CD8-positive, alpha-beta T cell (primary cell): ENCODE measurements at regions of chr3 and their contacts with region 1.

Region 1: GRCh38 chr3:14261229-14261628 is 82.6 kb downstream of the LSM3 start:
- DNase-seq: peak; percentile 50 to 88 (median 77)
- ATAC-seq: no peak
- H3K4me3 ChIP-seq: no peak overlapping the region
- H3K4me3 Mint-ChIP-seq: no peak overlapping the region
- H3K27ac ChIP-seq: no peak overlapping the region
- H3K27ac Mint-ChIP-seq: no peak overlapping the region
- H3K4me1 ChIP-seq: no peaks in the 10 kb centered on the region
- H3K4me1 Mint-ChIP-seq: no peaks in the 10 kb centered on the region
- H3K27me3 ChIP-seq: no peaks in the 10 kb centered on the region
- H3K27me3 Mint-ChIP-seq: peaks cover 2% of the 10 kb centered on the region
- CTCF ChIP-seq: peak; percentile 100

Region 2: DNA sequence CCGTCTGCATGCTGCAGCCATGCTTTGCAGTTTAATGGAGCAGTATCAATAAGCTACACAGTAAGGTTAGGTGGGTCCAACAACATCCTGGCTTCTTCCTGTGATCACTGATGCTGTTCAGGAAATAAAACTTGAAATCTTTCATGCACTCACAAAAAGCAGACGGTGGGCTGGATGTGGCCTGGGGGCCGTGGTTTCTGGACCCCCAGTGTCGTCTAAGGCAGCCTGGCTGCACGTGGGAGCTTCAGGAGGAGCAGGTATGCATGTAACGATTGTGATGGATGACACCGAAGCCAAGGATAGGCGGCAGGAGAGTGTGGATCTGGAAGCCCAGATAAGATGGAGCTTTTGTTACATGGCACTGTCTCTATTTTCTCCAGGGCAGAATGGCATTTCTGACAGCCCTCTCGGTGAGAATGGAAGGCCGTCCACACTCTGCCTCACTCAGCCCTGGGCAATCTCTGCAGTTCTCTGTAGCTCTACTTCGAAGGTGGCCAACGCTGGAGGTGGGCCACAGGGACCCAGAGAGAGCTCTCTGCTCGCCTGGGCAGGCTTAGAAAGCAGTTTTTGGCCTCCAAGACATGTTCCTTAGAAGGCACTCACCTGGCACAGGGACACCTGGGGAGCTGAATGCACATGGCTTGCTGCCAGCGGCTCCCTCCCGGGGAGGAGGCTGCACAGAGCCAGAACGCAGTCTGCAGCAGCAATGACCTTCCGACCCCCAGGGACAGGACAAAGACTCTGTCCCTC is 1141.6 kb before region 1 on chr3:
- CTCF ChIA-PET with region 1: no interaction called
- POLR2A ChIA-PET with region 1: no interaction called
- intact Hi-C with region 1: no loop called
- DNase-seq: no peak
- ATAC-seq: no peak
- H3K4me3 ChIP-seq: no peak overlapping the region
- H3K4me3 Mint-ChIP-seq: no peak overlapping the region
- H3K27ac ChIP-seq: no peak overlapping the region
- H3K27ac Mint-ChIP-seq: no peak overlapping the region
- H3K4me1 ChIP-seq: no peaks in the 10 kb centered on the region
- H3K4me1 Mint-ChIP-seq: no peaks in the 10 kb centered on the region
- H3K27me3 ChIP-seq: no peaks in the 10 kb centered on the region
- H3K27me3 Mint-ChIP-seq: peaks cover 2% of the 10 kb centered on the region
- CTCF ChIP-seq: no peak

Region 3: GRCh38 chr3:14275962-14276909 is 15.0 kb after region 1 on chr3:
- CTCF ChIA-PET with region 1: interaction called, 10 read pairs
- POLR2A ChIA-PET with region 1: no interaction called
- intact Hi-C with region 1: no loop called
- DNase-seq: no peak
- ATAC-seq: no peak
- H3K4me3 ChIP-seq: no peak overlapping the region
- H3K4me3 Mint-ChIP-seq: no peak overlapping the region
- H3K27ac ChIP-seq: no peak overlapping the region
- H3K27ac Mint-ChIP-seq: no peak overlapping the region
- H3K4me1 ChIP-seq: no peaks in the 10 kb centered on the region
- H3K4me1 Mint-ChIP-seq: no peaks in the 10 kb centered on the region
- H3K27me3 ChIP-seq: no peaks in the 10 kb centered on the region
- H3K27me3 Mint-ChIP-seq: peaks cover 10% of the 10 kb centered on the region
- CTCF ChIP-seq: no peak

Region 4: GRCh38 chr3:14301558-14301957 is 40.3 kb after region 1 on chr3:
- CTCF ChIA-PET with region 1: no interaction called
- POLR2A ChIA-PET with region 1: no interaction called
- intact Hi-C with region 1: no loop called
- DNase-seq: no peak
- ATAC-seq: no peak
- H3K4me3 ChIP-seq: no peak overlapping the region
- H3K4me3 Mint-ChIP-seq: no peak overlapping the region
- H3K27ac ChIP-seq: no peak overlapping the region
- H3K27ac Mint-ChIP-seq: no peak overlapping the region
- H3K4me1 ChIP-seq: no peaks in the 10 kb centered on the region
- H3K4me1 Mint-ChIP-seq: peaks cover 6% of the 10 kb centered on the region
- H3K27me3 ChIP-seq: no peaks in the 10 kb centered on the region
- H3K27me3 Mint-ChIP-seq: peaks cover 2% of the 10 kb centered on the region
- CTCF ChIP-seq: no peak

Region 5: DNA sequence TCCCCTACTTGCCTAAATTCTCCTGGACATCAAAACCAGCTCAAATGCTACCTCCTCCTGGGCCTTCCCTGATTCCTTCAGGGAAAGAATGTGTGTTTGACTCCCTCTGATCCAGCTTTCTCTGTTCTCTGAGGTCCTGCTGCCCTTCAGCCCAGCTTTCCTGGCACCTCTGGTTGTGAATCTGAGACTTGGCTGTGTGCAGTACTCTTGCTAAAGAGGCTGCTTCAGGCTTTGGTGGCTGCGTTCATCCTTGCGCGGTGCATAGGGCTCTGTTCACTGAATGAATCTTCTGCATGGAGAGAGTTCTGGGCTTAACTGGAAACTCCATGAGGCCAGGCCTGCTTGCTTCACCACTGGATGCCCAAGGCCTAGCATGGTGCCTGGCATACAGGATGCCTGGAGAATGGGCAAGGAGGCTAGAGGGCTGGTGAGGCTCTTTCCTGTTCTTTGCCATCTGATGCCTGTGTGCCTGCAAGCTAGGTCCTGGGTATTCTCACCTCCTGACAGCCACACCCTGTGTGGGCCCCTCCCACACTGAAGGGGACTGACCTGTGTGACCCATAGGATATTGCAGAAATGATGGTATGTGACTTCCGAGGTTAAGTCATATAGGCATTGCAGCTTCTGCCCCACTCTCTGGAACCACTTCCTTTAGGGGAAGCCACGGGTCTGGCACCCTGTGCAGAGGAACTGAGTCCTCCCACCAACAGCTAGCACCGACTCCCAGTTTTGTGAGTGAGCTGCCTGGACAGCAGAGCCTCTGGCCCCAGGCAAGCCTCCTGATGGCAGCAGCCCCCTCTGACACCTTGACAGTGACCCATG is 116.3 kb after region 1 on chr3:
- CTCF ChIA-PET with region 1: interaction called, 15 read pairs
- POLR2A ChIA-PET with region 1: no interaction called
- intact Hi-C with region 1: no loop called
- DNase-seq: peak; percentile 15 to 81 (median 41)
- ATAC-seq: peak; percentile 88
- H3K4me3 ChIP-seq: no peak overlapping the region
- H3K4me3 Mint-ChIP-seq: no peak overlapping the region
- H3K27ac ChIP-seq: no peak overlapping the region
- H3K27ac Mint-ChIP-seq: peak overlapping the region; percentile 56
- H3K4me1 ChIP-seq: peaks cover 16% of the 10 kb centered on the region
- H3K4me1 Mint-ChIP-seq: peaks cover 21% of the 10 kb centered on the region
- H3K27me3 ChIP-seq: no peaks in the 10 kb centered on the region
- H3K27me3 Mint-ChIP-seq: no peaks in the 10 kb centered on the region
- CTCF ChIP-seq: no peak

Region 6: DNA sequence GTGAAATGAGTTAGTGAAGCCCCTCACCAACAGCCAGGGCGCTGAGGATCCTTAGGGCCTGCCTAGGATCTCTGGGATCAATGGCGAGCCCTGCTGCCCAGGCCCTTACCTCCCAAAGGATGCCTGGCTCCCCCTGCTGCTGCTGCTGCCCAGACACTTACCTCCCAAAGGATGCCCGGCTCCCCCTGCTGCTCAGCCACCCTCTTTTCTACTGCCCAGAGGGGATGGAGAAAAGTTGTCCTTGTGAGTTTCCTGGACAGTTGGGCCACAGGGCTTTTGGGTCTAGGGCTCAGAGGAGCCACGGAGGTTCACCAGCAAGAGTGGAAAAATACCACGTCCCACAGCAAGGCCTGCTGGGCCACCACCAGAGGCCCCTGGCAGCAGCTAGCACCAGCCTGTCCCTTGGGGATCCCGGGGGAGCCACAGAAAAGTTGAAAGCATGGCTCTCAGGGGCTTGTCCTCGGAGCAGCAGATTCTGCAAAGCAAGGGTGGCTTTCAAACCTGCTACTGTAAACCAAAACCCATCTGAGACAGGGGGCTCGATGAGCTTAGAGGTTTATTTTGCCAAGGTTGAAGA is 200.6 kb after region 1 on chr3:
- CTCF ChIA-PET with region 1: interaction called, 204 read pairs
- POLR2A ChIA-PET with region 1: no interaction called
- intact Hi-C with region 1: loop called in 1 of 2 experiments (anchors 1 kb)
- DNase-seq: peak in 8 of 9 experiments; percentile 22 to 68 (median 53)
- ATAC-seq: peak; percentile 64
- H3K4me3 ChIP-seq: no peak overlapping the region
- H3K4me3 Mint-ChIP-seq: no peak overlapping the region
- H3K27ac ChIP-seq: no peak overlapping the region
- H3K27ac Mint-ChIP-seq: no peak overlapping the region
- H3K4me1 ChIP-seq: no peaks in the 10 kb centered on the region
- H3K4me1 Mint-ChIP-seq: no peaks in the 10 kb centered on the region
- H3K27me3 ChIP-seq: no peaks in the 10 kb centered on the region
- H3K27me3 Mint-ChIP-seq: no peaks in the 10 kb centered on the region
- CTCF ChIP-seq: no peak

Region 7: DNA sequence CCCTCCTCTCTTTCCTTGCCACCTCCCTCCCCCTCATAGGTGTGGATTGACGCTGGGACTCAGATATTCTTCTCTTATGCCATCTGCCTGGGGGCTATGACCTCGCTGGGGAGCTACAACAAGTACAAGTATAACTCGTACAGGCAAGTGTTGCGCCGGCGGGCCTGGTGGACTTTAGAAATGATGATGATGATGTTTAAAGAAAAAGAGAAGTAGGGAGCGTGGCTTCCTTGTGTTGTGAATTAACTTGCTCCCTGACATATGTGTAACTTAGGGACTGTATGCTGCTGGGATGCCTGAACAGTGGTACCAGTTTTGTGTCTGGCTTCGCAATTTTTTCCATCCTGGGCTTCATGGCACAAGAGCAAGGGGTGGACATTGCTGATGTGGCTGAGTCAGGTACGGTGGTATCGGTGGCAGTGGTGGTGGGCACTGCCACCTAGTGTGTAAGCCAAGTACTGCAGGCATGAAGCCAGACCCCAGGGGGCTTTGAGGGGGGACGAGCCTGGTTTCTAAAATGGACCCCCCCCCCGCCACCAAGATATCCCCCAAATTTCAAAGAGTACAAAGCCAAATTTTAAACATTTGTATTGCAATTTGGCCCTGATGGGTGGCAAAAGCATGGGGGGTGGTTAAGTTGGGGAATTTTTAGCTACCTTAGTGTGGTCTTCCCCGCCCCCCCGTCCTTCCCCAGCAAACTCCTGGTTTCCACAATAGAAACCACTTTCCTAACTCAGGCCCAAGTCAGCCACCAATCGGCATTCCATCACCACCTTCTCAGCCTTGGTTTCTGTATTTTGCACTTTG is 206.8 kb after region 1 on chr3:
- CTCF ChIA-PET with region 1: interaction called, 204 read pairs
- POLR2A ChIA-PET with region 1: no interaction called
- intact Hi-C with region 1: loop called (anchors 1 kb)
- DNase-seq: peak; percentile 17 to 69 (median 48)
- ATAC-seq: peak; percentile 84
- H3K4me3 ChIP-seq: no peak overlapping the region
- H3K4me3 Mint-ChIP-seq: no peak overlapping the region
- H3K27ac ChIP-seq: no peak overlapping the region
- H3K27ac Mint-ChIP-seq: no peak overlapping the region
- H3K4me1 ChIP-seq: no peaks in the 10 kb centered on the region
- H3K4me1 Mint-ChIP-seq: no peaks in the 10 kb centered on the region
- H3K27me3 ChIP-seq: no peaks in the 10 kb centered on the region
- H3K27me3 Mint-ChIP-seq: no peaks in the 10 kb centered on the region
- CTCF ChIP-seq: peak; percentile 87

Region 8: GRCh38 chr3:14548321-14548729 is 287.1 kb after region 1 on chr3:
- CTCF ChIA-PET with region 1: interaction called, 4 read pairs
- POLR2A ChIA-PET with region 1: no interaction called
- intact Hi-C with region 1: loop called in 1 of 2 experiments (anchors 1 kb)
- DNase-seq: peak in 8 of 9 experiments; percentile 3 to 53 (median 36)
- ATAC-seq: no peak
- H3K4me3 ChIP-seq: no peak overlapping the region
- H3K4me3 Mint-ChIP-seq: no peak overlapping the region
- H3K27ac ChIP-seq: no peak overlapping the region
- H3K27ac Mint-ChIP-seq: no peak overlapping the region
- H3K4me1 ChIP-seq: no peaks in the 10 kb centered on the region
- H3K4me1 Mint-ChIP-seq: no peaks in the 10 kb centered on the region
- H3K27me3 ChIP-seq: no peaks in the 10 kb centered on the region
- H3K27me3 Mint-ChIP-seq: peaks cover 30% of the 10 kb centered on the region
- CTCF ChIP-seq: peak; percentile 25

Region 9: DNA sequence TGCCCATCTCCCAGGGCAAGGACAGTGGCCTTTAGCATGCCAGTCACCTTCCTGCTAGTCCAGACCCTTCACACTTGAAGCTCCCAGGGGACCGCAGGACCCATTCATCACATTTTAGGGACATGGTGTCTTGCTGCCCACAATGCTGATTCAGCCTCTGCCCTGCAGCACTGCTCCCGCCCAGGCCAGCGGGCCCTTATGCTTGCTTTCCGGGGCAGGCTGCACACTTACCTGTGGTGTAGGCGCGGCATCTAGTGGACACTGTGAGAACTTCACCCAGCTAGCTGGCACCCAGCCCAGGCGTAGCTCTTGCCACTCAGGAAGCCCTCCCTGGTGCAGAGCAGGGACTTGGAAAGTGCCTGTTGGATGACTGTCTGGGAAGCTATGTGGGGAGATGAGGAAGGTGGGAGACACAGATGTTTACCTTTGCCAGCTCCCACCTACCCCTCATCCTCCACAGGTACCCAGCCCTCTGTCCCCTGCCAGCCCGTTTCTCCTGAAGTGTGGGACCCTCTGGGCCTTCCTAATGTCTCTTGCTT is 659.9 kb after region 1 on chr3:
- CTCF ChIA-PET with region 1: interaction called, 3 read pairs
- POLR2A ChIA-PET with region 1: no interaction called
- intact Hi-C with region 1: loop called (anchors 2 to 5 kb)
- DNase-seq: peak; percentile 68 to 93 (median 83)
- ATAC-seq: peak; percentile 99
- H3K4me3 ChIP-seq: no peak overlapping the region
- H3K4me3 Mint-ChIP-seq: no peak overlapping the region
- H3K27ac ChIP-seq: no peak overlapping the region
- H3K27ac Mint-ChIP-seq: no peak overlapping the region
- H3K4me1 ChIP-seq: peaks cover 4% of the 10 kb centered on the region
- H3K4me1 Mint-ChIP-seq: no peaks in the 10 kb centered on the region
- H3K27me3 ChIP-seq: no peaks in the 10 kb centered on the region
- H3K27me3 Mint-ChIP-seq: no peaks in the 10 kb centered on the region
- CTCF ChIP-seq: peak; percentile 99

Region 10: DNA sequence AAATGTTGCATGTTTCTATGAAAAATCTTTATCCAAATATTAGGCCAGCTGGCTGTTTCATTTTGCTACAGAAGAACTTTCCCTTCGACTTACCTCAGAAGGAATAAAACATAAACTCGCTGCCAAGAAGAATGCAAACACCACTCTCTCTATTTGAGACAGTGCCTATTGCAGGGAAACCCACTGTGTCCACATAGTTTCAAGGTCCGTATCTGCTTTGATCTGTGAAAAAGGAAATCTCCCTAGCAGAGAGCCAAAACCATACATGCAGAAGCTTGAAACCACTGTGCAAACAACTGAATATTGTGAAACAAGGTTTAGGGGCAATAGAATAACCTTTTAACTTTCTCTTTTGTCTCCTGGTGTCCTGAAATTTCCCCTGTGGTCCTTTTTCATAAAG is 909.9 kb after region 1 on chr3:
- CTCF ChIA-PET with region 1: no interaction called
- POLR2A ChIA-PET with region 1: no interaction called
- intact Hi-C with region 1: no loop called
- DNase-seq: no peak
- ATAC-seq: no peak
- H3K4me3 ChIP-seq: no peak overlapping the region
- H3K4me3 Mint-ChIP-seq: no peak overlapping the region
- H3K27ac ChIP-seq: no peak overlapping the region
- H3K27ac Mint-ChIP-seq: no peak overlapping the region
- H3K4me1 ChIP-seq: no peaks in the 10 kb centered on the region
- H3K4me1 Mint-ChIP-seq: no peaks in the 10 kb centered on the region
- H3K27me3 ChIP-seq: no peaks in the 10 kb centered on the region
- H3K27me3 Mint-ChIP-seq: peaks cover 17% of the 10 kb centered on the region
- CTCF ChIP-seq: no peak